Naive thymus-derived CD4-positive, alpha-beta T cell (primary cell): ENCODE measurements at regions of chr19 and their contacts with region 1.

Region 1: DNA sequence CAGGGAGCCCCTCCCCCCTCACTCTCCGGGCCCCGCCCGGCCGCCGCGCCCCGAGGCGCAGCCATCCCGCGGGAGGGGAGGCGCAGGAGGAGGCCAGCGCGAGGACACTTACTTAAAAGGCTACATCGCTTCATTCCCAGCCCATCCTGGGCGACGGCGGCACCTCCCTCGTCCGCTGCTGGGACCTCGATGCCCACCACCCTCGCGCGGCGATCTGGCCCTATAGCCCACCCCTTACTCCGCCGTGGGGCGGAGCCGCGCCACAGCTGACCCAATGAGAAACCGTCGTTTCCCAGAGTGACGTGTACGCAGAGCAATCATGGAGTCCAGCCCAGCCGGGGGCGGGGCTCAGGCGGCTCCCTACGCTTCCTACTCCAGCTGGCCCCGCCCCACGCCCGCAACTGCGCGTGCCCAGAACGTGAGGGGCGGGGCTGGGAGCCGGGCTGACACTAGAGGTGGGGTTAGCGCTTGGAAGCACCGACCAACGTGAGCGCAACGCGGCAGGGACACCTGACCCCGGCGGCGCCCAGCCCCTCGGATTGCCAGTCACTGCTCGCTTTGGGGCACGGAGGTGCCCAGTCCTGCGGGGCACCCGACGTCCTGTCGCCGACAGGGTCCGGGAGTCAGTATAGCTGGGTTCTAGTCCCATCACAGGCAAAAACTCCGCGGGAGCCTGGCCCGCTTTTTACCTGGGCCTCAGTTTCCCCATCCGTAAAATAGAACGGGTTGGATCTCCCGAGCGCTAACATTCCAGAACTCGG is at the start of gene ANKRD27:
- DNase-seq: peak; percentile 96 to 100 (median 98)
- ATAC-seq: peak; percentile 96
- H3K4me3 ChIP-seq: peak within 1 kb of the TSS; percentile 97
- H3K4me3 Mint-ChIP-seq: peak within 1 kb of the TSS; percentile 90 to 98 (median 96)
- H3K27ac ChIP-seq: peak within 1 kb of the TSS; percentile 67
- H3K27ac Mint-ChIP-seq: peak within 1 kb of the TSS; percentile 70 to 90 (median 83)
- H3K4me1 ChIP-seq: peaks cover 10 to 14% of the 10 kb centered on the region in 2 donors
- H3K4me1 Mint-ChIP-seq: peaks cover 25 to 44% (median 36%) of the 10 kb centered on the region in 7 donors
- H3K27me3 ChIP-seq: no peaks in the 10 kb centered on the region
- H3K27me3 Mint-ChIP-seq: peaks cover 6 to 35% (median 8%) of the 10 kb centered on the region in 5 donors
- total RNA-seq, gene ANKRD27: 23.6 to 44.9 (median 41.2) TPM

Region 2: GRCh38 chr19:32345261-32346207 is 329.6 kb before region 1 on chr19 and contains the start of gene ZNF507:
- CTCF ChIA-PET with region 1: no interaction called
- POLR2A ChIA-PET with region 1: no interaction called
- intact Hi-C with region 1: loop called (anchors 1 to 5 kb)
- DNase-seq: peak; percentile 69 to 90 (median 77)
- ATAC-seq: peak; percentile 93
- H3K4me3 ChIP-seq: peak within 1 kb of the TSS; percentile 71
- H3K4me3 Mint-ChIP-seq: peak within 1 kb of the TSS; percentile 95 to 99 (median 97)
- H3K27ac ChIP-seq: peak within 1 kb of the TSS; percentile 89
- H3K27ac Mint-ChIP-seq: peak within 1 kb of the TSS; percentile 88 to 99 (median 95)
- H3K4me1 ChIP-seq: peaks cover 27 to 30% of the 10 kb centered on the region in 2 donors
- H3K4me1 Mint-ChIP-seq: peaks cover 30 to 47% (median 43%) of the 10 kb centered on the region in 7 donors
- H3K27me3 ChIP-seq: no peaks in the 10 kb centered on the region
- H3K27me3 Mint-ChIP-seq: peaks cover 0 to 18% (median 5%) of the 10 kb centered on the region in 5 donors
- total RNA-seq, gene ZNF507: 21.6 to 46.3 (median 36.4) TPM

Region 3: DNA sequence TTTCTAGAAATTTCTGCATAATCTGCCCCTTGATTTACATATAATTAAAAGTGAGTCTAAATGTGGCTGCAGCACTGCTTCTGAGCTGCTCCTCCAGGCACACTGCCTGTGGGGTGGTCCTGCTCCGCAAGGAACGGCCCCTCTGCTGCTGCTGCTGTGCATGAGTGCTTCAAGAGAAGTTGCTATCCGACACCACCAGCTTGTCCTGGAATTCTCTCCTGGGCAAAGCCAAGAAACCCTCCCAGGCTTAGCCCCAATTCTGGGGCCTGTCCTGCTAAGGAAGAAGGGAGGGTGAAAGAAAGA is 101.7 kb before region 1 on chr19:
- CTCF ChIA-PET with region 1: no interaction called
- POLR2A ChIA-PET with region 1: no interaction called
- intact Hi-C with region 1: no loop called
- DNase-seq: no peak
- ATAC-seq: no peak
- H3K4me3 ChIP-seq: no peak overlapping the region
- H3K4me3 Mint-ChIP-seq: peak overlapping the region in 8 of 10 donors; percentile 47 to 95 (median 70)
- H3K27ac ChIP-seq: no peak overlapping the region
- H3K27ac Mint-ChIP-seq: no peak overlapping the region
- H3K4me1 ChIP-seq: no peaks in the 10 kb centered on the region
- H3K4me1 Mint-ChIP-seq: peaks cover 10 to 21% (median 16%) of the 10 kb centered on the region in 7 donors
- H3K27me3 ChIP-seq: no peaks in the 10 kb centered on the region
- H3K27me3 Mint-ChIP-seq: peaks cover 3 to 24% (median 8%) of the 10 kb centered on the region in 5 donors

Region 4: GRCh38 chr19:32599736-32600157 is 75.4 kb before region 1 on chr19:
- CTCF ChIA-PET with region 1: interaction called, 4 read pairs
- POLR2A ChIA-PET with region 1: interaction called, 3 read pairs
- intact Hi-C with region 1: loop called (anchors 1 kb)
- DNase-seq: peak in 7 of 9 donors; percentile 22 to 63 (median 58)
- ATAC-seq: peak; percentile 72
- H3K4me3 ChIP-seq: no peak overlapping the region
- H3K4me3 Mint-ChIP-seq: no peak overlapping the region
- H3K27ac ChIP-seq: no peak overlapping the region
- H3K27ac Mint-ChIP-seq: peak overlapping the region in 2 of 9 donors; percentile 3 to 66
- H3K4me1 ChIP-seq: no peaks in the 10 kb centered on the region
- H3K4me1 Mint-ChIP-seq: peaks cover 5 to 8% (median 7%) of the 10 kb centered on the region in 7 donors
- H3K27me3 ChIP-seq: no peaks in the 10 kb centered on the region
- H3K27me3 Mint-ChIP-seq: no peaks in the 10 kb centered on the region

Region 5: GRCh38 chr19:32691291-32691951 is 16.3 kb after region 1 on chr19 and contains the start of gene NUDT19:
- CTCF ChIA-PET with region 1: interaction called, 4 read pairs
- POLR2A ChIA-PET with region 1: interaction called, 15 read pairs
- intact Hi-C with region 1: loop called (anchors 1 kb)
- DNase-seq: peak; percentile 50 to 82 (median 62)
- ATAC-seq: peak; percentile 87
- H3K4me3 ChIP-seq: peak within 1 kb of the TSS; percentile 50
- H3K4me3 Mint-ChIP-seq: peak within 1 kb of the TSS; percentile 83 to 97 (median 92)
- H3K27ac ChIP-seq: peak within 1 kb of the TSS; percentile 68
- H3K27ac Mint-ChIP-seq: peak within 1 kb of the TSS; percentile 37 to 93 (median 85)
- H3K4me1 ChIP-seq: peaks cover 20 to 24% of the 10 kb centered on the region in 2 donors
- H3K4me1 Mint-ChIP-seq: peaks cover 35 to 52% (median 47%) of the 10 kb centered on the region in 7 donors
- H3K27me3 ChIP-seq: no peaks in the 10 kb centered on the region
- H3K27me3 Mint-ChIP-seq: no peaks in the 10 kb centered on the region
- total RNA-seq, gene NUDT19: 8.4 to 17.0 (median 9.0) TPM

Region 6: GRCh38 chr19:32798201-32798600 is 123.1 kb after region 1 on chr19:
- CTCF ChIA-PET with region 1: no interaction called
- POLR2A ChIA-PET with region 1: interaction called, 4 read pairs
- intact Hi-C with region 1: loop called in 1 of 2 experiments (anchors 1 kb)
- DNase-seq: no peak
- ATAC-seq: no peak
- H3K4me3 ChIP-seq: no peak overlapping the region
- H3K4me3 Mint-ChIP-seq: no peak overlapping the region
- H3K27ac ChIP-seq: no peak overlapping the region
- H3K27ac Mint-ChIP-seq: peak overlapping the region in 1 of 9 donors; percentile 10
- H3K4me1 ChIP-seq: peaks cover 21 to 42% of the 10 kb centered on the region in 2 donors
- H3K4me1 Mint-ChIP-seq: peaks cover 26 to 82% (median 69%) of the 10 kb centered on the region in 7 donors
- H3K27me3 ChIP-seq: no peaks in the 10 kb centered on the region
- H3K27me3 Mint-ChIP-seq: peaks cover 0 to 5% (median 0%) of the 10 kb centered on the region in 5 donors

Region 7: GRCh38 chr19:33080761-33081681 is 405.9 kb after region 1 on chr19 and contains the start of gene GPATCH1:
- CTCF ChIA-PET with region 1: no interaction called
- POLR2A ChIA-PET with region 1: interaction called, 3 read pairs
- intact Hi-C with region 1: loop called in 1 of 2 experiments (anchors 1 kb)
- DNase-seq: peak; percentile 79 to 92 (median 85)
- ATAC-seq: peak; percentile 99
- H3K4me3 ChIP-seq: peak within 1 kb of the TSS; percentile 98
- H3K4me3 Mint-ChIP-seq: peak within 1 kb of the TSS; percentile 92 to 99 (median 94)
- H3K27ac ChIP-seq: peak within 1 kb of the TSS; percentile 84
- H3K27ac Mint-ChIP-seq: peak within 1 kb of the TSS; percentile 89 to 99 (median 94)
- H3K4me1 ChIP-seq: peaks cover 10 to 11% of the 10 kb centered on the region in 2 donors
- H3K4me1 Mint-ChIP-seq: peaks cover 20 to 39% (median 30%) of the 10 kb centered on the region in 7 donors
- H3K27me3 ChIP-seq: no peaks in the 10 kb centered on the region
- H3K27me3 Mint-ChIP-seq: no peaks in the 10 kb centered on the region
- total RNA-seq, gene GPATCH1: 11.2 to 20.0 (median 14.4) TPM